ENCODE measurements at regions of chr17 and their contacts with region 1.

Region 1: DNA sequence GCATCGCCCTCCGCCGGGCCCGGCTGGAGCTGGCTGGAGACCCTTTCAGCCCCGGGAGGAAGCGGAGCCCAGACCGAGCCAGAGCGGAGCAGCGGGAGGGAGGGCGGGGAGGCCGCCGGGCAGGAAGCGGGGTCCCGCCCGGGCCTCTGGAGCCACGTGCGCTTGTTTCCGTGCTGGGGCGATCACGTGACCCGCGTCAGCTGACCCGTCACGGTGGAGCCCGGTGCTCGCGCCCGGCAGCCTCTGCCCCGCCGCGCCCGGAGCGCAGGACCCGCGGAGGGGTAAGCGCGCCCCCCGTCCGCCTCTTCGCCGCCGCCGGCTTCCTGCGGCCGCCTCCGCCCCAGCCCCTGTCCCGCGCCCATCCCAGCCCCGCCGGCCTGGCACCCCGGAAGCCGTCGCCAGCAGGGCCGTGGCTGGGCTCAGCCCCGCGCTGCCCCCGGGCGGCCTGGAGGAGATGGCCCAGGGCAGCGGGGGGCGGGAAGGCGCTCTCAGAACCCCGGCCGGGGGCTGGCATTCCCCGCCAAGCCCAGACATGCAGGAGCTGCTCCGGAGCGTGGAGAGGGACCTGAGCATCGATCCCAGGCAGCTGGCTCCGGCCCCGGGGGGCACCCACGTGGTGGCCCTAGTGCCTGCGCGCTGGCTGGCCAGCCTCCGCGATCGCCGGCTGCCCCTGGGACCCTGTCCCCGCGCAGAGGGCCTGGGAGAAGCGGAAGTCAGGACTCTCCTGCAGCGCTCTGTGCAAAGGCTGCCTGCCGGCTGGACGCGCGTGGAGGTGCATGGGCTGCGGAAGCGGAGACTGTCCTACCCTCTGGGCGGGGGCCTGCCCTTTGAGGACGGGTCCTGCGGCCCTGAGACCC is at the start of gene WDR81:
- DNase-seq: peak; percentile 87 to 98 (median 91)
- H3K4me3 ChIP-seq: peak within 1 kb of the TSS; percentile 16 to 58 (median 56)
- H3K27ac ChIP-seq: peak within 1 kb of the TSS; percentile 51 to 67
- H3K4me1 ChIP-seq: peaks cover 0 to 27% (median 0%) of the 10 kb centered on the region in 3 donors
- H3K27me3 ChIP-seq: no peaks in the 10 kb centered on the region
- CTCF ChIP-seq: no peak
- total RNA-seq, gene WDR81: 28.5 TPM

Region 2: DNA sequence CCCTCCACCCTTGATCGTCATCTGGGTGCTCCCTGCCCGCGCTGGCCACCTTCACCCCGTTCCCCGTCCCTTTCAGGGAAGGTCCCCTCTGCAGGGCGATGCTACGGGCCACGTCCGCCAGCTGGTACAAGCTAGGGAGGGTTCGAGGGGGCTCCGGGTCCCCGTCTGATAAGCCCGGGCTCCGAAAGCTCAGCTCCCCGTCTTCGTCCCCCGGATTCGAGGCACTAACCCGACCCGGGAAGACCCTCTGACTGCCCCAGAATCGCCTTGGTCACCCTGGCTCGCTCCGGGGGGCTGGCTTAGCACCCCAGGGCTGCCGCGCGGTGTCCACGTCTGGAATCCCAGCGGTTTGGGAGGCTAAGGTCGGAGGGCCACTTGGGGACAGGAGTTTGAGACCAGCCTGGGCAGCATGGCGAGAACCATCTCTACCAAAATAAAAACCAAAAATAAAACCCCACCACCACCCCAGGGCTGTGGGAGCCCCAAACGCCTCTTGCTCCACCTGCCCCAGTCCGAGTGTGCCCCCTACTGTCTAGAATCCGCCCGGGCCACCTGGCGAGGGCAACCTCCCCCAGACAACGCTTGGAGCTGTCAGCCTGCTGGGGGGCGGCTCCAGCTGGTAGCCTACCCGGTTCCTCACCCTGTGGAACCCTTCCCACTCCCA is 95.0 kb before region 1 on chr17:
- intact Hi-C with region 1: no loop called
- DNase-seq: peak in 3 of 5 donors; percentile 65 to 88 (median 78)
- H3K4me3 ChIP-seq: peak overlapping the region; percentile 39 to 88 (median 65)
- H3K27ac ChIP-seq: peak overlapping the region; percentile 91 to 93
- H3K4me1 ChIP-seq: peaks cover 0 to 21% (median 14%) of the 10 kb centered on the region in 3 donors
- H3K27me3 ChIP-seq: no peaks in the 10 kb centered on the region
- CTCF ChIP-seq: peak; percentile 59

Region 3: DNA sequence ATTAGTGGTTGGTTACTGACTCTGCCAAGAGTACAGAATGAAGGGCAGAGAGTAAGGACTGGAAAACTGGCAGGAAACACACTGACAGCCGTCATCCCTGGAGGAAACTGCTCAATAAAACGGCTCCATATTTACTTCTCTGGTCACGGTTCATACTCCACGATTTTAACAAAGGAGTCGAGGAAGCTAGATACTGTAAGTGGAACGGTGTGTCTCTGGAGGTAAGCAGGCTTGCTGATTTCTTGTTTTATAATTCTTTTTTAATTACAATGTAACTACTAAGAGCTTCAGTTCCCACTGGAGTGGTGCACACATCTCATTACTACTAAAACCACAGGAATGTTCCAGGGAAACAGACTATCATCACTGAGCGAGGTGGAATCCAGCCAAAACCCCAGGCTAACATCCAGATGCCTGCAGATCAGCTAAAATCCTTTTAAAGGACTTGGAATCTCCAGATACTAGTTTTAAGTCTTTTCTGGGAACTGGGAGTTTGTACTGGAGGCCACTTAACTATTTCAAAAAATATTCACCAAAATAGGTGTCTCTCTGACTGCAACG is 54.9 kb after region 1 on chr17:
- intact Hi-C with region 1: loop called (anchors 10 kb)
- DNase-seq: peak in 2 of 5 donors; percentile 84 to 87
- H3K4me3 ChIP-seq: no peak overlapping the region
- H3K27ac ChIP-seq: peak overlapping the region; percentile 74 to 76
- H3K4me1 ChIP-seq: peaks cover 0 to 17% (median 7%) of the 10 kb centered on the region in 3 donors
- H3K27me3 ChIP-seq: no peaks in the 10 kb centered on the region
- CTCF ChIP-seq: no peak

Measured in kidney (tissue), 22 donors.